ENCODE measurements at regions of chr5 and their contacts with region 1.

Region 1: DNA sequence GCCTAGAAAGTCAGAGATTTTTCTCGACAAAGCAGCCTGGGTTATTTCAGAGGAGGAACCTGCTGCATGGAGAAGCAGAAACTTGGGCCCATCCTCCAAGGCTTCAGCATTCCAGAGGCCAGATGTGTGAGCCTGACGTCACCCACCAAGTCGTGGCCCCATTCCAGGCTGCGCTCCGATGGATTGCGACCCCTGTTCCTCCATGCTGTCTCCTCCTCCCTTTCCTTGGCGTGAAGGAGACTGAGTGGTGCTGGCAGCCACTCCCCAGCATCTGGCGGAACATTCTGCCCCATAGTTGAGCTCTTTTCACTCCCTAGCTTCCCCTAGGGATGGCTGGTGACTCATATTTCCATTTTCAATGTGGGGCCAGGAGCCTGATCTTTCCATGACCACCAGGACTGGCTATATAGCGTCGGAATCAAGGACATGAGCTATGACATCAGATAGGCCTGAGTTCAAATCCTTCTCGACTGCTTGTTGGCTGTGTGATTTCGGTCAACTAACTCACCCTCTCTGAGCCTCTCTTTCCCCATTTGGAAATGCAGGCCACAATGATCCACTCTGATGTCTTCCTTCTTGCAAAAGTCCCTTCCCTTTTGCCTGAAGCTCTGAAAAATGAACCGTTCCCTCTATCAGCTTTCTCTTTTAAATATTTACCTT is 24.5 kb upstream of the DUSP1 start:
- DNase-seq: peak; percentile 99
- ATAC-seq: peak; percentile 53
- H3K4me3 ChIP-seq: no peak overlapping the region
- H3K27ac ChIP-seq: peak overlapping the region; percentile 53
- H3K4me1 ChIP-seq: peaks cover 35% of the 10 kb centered on the region
- H3K27me3 ChIP-seq: no peaks in the 10 kb centered on the region
- CTCF ChIP-seq: 0 out of 2 replicates have a peak, but pooled peaks have one; percentile 4
- POLR2A ChIP-seq: no peak; the same call in 1 of the 2 replicates
- RAD21 ChIP-seq: no peak; the same call in 1 of the 2 replicates

Region 2: DNA sequence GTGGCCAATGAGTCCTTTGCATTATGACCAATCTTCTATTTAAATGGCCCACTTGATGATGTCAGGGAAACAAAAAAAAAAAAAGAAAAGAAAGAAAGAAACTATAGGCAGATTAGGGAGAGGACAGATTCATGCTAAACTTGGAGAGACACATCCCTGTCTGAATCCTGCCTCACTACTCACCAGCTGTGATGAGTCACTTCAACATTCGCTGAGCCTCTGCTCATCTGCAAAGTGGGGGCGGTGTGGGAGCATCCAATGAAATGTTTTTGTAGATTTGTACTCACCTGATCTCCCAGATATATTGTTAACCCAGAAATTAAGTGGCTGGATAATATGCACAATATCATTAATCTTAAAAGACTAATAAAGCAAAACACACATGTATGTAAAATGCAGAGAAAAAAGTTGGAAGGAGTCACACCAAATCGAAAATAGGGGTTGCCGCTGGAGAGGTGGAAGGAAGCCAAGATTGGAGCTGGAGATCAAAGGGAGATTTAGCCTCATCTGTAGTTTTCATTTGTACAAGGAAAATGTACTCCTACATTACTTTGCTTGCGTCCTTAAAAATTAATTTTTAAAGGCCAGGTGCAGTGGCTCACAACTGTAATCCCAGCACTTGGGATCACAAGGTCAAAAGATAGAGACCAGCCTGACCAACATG is 21.6 kb after region 1 on chr5:
- CTCF ChIA-PET with region 1: interaction called, 3 read pairs
- POLR2A ChIA-PET with region 1: interaction called, 14 read pairs
- dilution Hi-C with region 1: no loop called
- in situ Hi-C with region 1: no loop called
- intact Hi-C with region 1: no loop called
- DNase-seq: peak; percentile 93
- ATAC-seq: peak; percentile 97
- H3K4me3 ChIP-seq: no peak overlapping the region
- H3K27ac ChIP-seq: 0 out of 2 replicates have a peak overlapping the region, but pooled peaks have one; percentile 5
- H3K4me1 ChIP-seq: peaks cover 11% of the 10 kb centered on the region
- H3K27me3 ChIP-seq: no peaks in the 10 kb centered on the region
- CTCF ChIP-seq: no peak
- POLR2A ChIP-seq: no peak
- RAD21 ChIP-seq: 0 out of 2 replicates have a peak, but pooled peaks have one; percentile 12